Natural killer cell (primary cell): ENCODE measurements at regions of chr2 and their contacts with region 1.

Region 1: GRCh38 chr2:85707304-85707703 is 13.1 kb downstream of the GNLY start:
- DNase-seq: peak in 1 of 2 donors; percentile 89
- ATAC-seq: peak; percentile 58 to 86 (median 66)
- H3K4me3 ChIP-seq: no peak overlapping the region
- H3K4me3 Mint-ChIP-seq: peak overlapping the region; percentile 87
- H3K27ac ChIP-seq: peak overlapping the region; percentile 97
- H3K27ac Mint-ChIP-seq: peak overlapping the region; percentile 93 to 96
- H3K4me1 ChIP-seq: peaks cover 65% of the 10 kb centered on the region
- H3K4me1 Mint-ChIP-seq: peaks cover 51 to 52% of the 10 kb centered on the region in 2 donors
- H3K27me3 ChIP-seq: no peaks in the 10 kb centered on the region
- H3K27me3 Mint-ChIP-seq: no peaks in the 10 kb centered on the region
- CTCF ChIP-seq: peak; percentile 75

Region 2: GRCh38 chr2:85409845-85410583 is 297.3 kb before region 1 on chr2 and contains the start of gene CAPG:
- intact Hi-C with region 1: loop called (anchors 5 kb)
- DNase-seq: peak in 1 of 2 donors; percentile 42
- ATAC-seq: peak in 1 of 3 donors; percentile 41
- H3K4me3 ChIP-seq: peak within 1 kb of the TSS; percentile 50
- H3K4me3 Mint-ChIP-seq: peak within 1 kb of the TSS; percentile 67
- H3K27ac ChIP-seq: peak within 1 kb of the TSS; percentile 59
- H3K27ac Mint-ChIP-seq: peak within 1 kb of the TSS in 1 of 2 donors; percentile 70
- H3K4me1 ChIP-seq: peaks cover 84% of the 10 kb centered on the region
- H3K4me1 Mint-ChIP-seq: peaks cover 58 to 62% of the 10 kb centered on the region in 2 donors
- H3K27me3 ChIP-seq: no peaks in the 10 kb centered on the region
- H3K27me3 Mint-ChIP-seq: peaks cover 0 to 14% of the 10 kb centered on the region in 2 donors
- CTCF ChIP-seq: no peak
- total RNA-seq, gene CAPG: 10.6 to 50.3 (median 19.3) TPM

Region 3: DNA sequence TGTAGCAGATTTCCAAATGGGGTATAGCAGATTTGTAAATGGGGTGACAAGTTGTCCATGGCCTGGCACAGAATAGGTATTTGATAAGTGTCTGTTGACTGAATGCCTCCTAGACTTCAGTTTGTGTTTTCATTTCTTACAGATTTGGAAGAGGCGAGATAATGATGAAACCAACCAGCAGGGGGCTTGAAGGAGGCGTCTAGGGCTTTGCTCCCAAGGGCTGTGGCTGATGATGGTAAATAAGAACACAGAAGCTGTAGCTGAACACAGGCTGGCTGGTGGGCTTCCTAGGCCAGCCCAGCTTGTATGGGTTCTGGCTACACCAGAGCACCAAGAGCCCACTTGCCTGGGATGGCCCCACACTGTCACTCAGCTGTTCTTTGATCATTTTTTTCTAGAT is 58.7 kb before region 1 on chr2:
- intact Hi-C with region 1: loop called (anchors 1 kb)
- DNase-seq: peak in 1 of 2 donors; percentile 32
- ATAC-seq: peak; percentile 34 to 68 (median 58)
- H3K4me3 ChIP-seq: no peak overlapping the region
- H3K4me3 Mint-ChIP-seq: no peak overlapping the region
- H3K27ac ChIP-seq: no peak overlapping the region
- H3K27ac Mint-ChIP-seq: no peak overlapping the region
- H3K4me1 ChIP-seq: peaks cover 10% of the 10 kb centered on the region
- H3K4me1 Mint-ChIP-seq: no peaks in the 10 kb centered on the region
- H3K27me3 ChIP-seq: no peaks in the 10 kb centered on the region
- H3K27me3 Mint-ChIP-seq: no peaks in the 10 kb centered on the region
- CTCF ChIP-seq: peak; percentile 36

Region 4: GRCh38 chr2:85678794-85679672 is 28.3 kb before region 1 on chr2:
- intact Hi-C with region 1: loop called (anchors 1 kb)
- DNase-seq: peak; percentile 80 to 85
- ATAC-seq: peak; percentile 95 to 99 (median 97)
- H3K4me3 ChIP-seq: no peak overlapping the region
- H3K4me3 Mint-ChIP-seq: peak overlapping the region; percentile 22
- H3K27ac ChIP-seq: no peak overlapping the region
- H3K27ac Mint-ChIP-seq: peak overlapping the region in 1 of 2 donors; percentile 13
- H3K4me1 ChIP-seq: peaks cover 49% of the 10 kb centered on the region
- H3K4me1 Mint-ChIP-seq: peaks cover 24 to 27% of the 10 kb centered on the region in 2 donors
- H3K27me3 ChIP-seq: no peaks in the 10 kb centered on the region
- H3K27me3 Mint-ChIP-seq: peaks cover 0 to 4% of the 10 kb centered on the region in 2 donors
- CTCF ChIP-seq: peak; percentile 96

Region 5: GRCh38 chr2:85694052-85695025 is 13.0 kb before region 1 on chr2 and contains the start of gene GNLY:
- intact Hi-C with region 1: loop called (anchors 1 kb)
- DNase-seq: peak; percentile 53 to 77
- ATAC-seq: peak; percentile 57 to 87 (median 79)
- H3K4me3 ChIP-seq: peak within 1 kb of the TSS; percentile 76
- H3K4me3 Mint-ChIP-seq: peak within 1 kb of the TSS; percentile 97
- H3K27ac ChIP-seq: peak within 1 kb of the TSS; percentile 85
- H3K27ac Mint-ChIP-seq: peak within 1 kb of the TSS; percentile 95 to 96
- H3K4me1 ChIP-seq: peaks cover 67% of the 10 kb centered on the region
- H3K4me1 Mint-ChIP-seq: peaks cover 74 to 80% of the 10 kb centered on the region in 2 donors
- H3K27me3 ChIP-seq: no peaks in the 10 kb centered on the region
- H3K27me3 Mint-ChIP-seq: no peaks in the 10 kb centered on the region
- CTCF ChIP-seq: no peak
- total RNA-seq, gene GNLY: 4,938 to 8,199 (median 6,542) TPM

Region 6: GRCh38 chr2:86035883-86036668 is 328.8 kb after region 1 on chr2:
- intact Hi-C with region 1: loop called (anchors 2 kb)
- DNase-seq: peak; percentile 57 to 90
- ATAC-seq: peak; percentile 33 to 55 (median 50)
- H3K4me3 ChIP-seq: peak overlapping the region; percentile 10
- H3K4me3 Mint-ChIP-seq: peak overlapping the region; percentile 92
- H3K27ac ChIP-seq: peak overlapping the region; percentile 98
- H3K27ac Mint-ChIP-seq: peak overlapping the region; percentile 98 to 99
- H3K4me1 ChIP-seq: peaks cover 68% of the 10 kb centered on the region
- H3K4me1 Mint-ChIP-seq: peaks cover 52 to 67% of the 10 kb centered on the region in 2 donors
- H3K27me3 ChIP-seq: no peaks in the 10 kb centered on the region
- H3K27me3 Mint-ChIP-seq: no peaks in the 10 kb centered on the region
- CTCF ChIP-seq: no peak